Activated CD8-positive, alpha-beta T cell treated with anti-CD3 and anti-CD28 coated beads, Interleukin-2, amount 10 ng/mL, durations not matched to agents 7 days and 5 days (primary cell): ENCODE measurements at regions of chr3 and their contacts with region 1.

Region 1: DNA sequence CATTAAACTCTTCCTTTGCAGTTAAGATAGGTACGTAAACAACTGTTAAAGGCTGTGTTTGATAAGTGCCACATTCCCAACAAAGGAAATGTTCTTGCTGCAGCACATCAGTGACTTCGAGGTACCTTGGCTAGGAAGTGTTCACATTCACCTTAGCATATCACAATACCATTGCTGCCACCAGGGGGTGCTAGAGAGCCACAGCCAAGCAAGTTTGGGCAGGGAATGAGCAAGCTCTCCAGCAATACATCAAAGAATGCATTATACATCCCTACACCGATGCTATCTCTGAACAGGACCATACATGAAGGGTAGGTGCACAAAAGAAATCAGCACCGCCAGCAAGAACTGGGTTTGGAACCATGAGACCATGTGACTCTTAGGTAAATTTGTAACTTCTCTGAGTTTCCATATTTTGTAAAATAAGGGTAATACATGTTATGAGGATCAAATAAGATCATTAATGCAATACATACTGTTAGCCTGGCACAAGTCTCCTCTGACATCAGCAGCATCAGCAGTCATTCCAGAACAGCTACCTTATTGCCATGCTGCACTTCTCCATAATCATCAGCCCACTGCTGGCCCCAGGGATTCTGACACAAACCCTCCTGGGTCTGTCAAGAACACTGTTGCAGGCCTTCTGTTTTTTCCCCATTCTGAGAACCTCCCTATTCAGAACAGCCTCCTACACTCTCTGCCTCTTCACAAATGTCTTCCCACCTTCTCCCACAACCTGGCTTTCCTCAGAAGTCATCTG is 37.6 kb downstream of the RYK start:
- DNase-seq: peak; percentile 88
- ATAC-seq: peak; percentile 91
- H3K4me3 Mint-ChIP-seq: no peak overlapping the region
- H3K27ac Mint-ChIP-seq: no peak overlapping the region
- H3K4me1 Mint-ChIP-seq: peaks cover 10% of the 10 kb centered on the region
- H3K27me3 Mint-ChIP-seq: no peaks in the 10 kb centered on the region

Region 2: GRCh38 chr3:133927540-133928066 is 285.5 kb before region 1 on chr3:
- CTCF ChIA-PET with region 1: interaction called, 28 read pairs
- POLR2A ChIA-PET with region 1: no interaction called
- DNase-seq: peak; percentile 70
- ATAC-seq: peak; percentile 96
- H3K4me3 Mint-ChIP-seq: peak overlapping the region; percentile 60
- H3K27ac Mint-ChIP-seq: no peak overlapping the region
- H3K4me1 Mint-ChIP-seq: peaks cover 9% of the 10 kb centered on the region
- H3K27me3 Mint-ChIP-seq: peaks cover 21% of the 10 kb centered on the region

Region 3: GRCh38 chr3:134232151-134232550 is 19.1 kb after region 1 on chr3:
- CTCF ChIA-PET with region 1: interaction called, 43 read pairs
- POLR2A ChIA-PET with region 1: no interaction called
- DNase-seq: no peak
- ATAC-seq: peak; percentile 53
- H3K4me3 Mint-ChIP-seq: no peak overlapping the region
- H3K27ac Mint-ChIP-seq: no peak overlapping the region
- H3K4me1 Mint-ChIP-seq: peaks cover 22% of the 10 kb centered on the region
- H3K27me3 Mint-ChIP-seq: peaks cover 3% of the 10 kb centered on the region

Region 4: DNA sequence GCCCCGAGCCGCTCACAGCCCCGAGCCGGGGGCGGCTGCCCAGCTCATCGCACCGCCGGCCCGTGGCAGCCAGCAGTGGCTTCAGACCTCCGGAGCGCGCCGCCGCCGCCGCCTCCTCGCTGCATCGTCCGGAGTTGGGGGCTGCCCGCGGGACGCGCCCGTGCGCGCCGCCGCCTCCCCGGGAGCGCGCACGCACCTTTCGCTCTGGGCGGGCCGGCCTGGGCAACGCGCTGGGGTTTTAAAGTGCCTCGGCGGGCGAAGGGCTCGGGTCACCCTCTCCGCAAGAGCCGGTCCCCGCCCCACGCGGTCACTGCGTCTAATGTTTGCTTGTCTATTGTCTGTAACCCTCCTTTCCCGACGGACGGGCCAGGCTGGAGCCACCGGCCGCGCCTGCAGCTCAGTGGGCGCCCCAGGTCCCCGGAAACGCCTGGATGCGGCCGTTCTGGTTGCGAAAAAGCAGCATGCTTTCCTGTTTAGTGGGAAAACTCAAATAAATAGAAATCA is 37.7 kb after region 1 on chr3 and contains the start of gene RYK:
- CTCF ChIA-PET with region 1: interaction called, 10 read pairs
- POLR2A ChIA-PET with region 1: no interaction called
- DNase-seq: peak; percentile 71
- ATAC-seq: peak; percentile 86
- H3K4me3 Mint-ChIP-seq: peak within 1 kb of the TSS; percentile 87
- H3K27ac Mint-ChIP-seq: peak within 1 kb of the TSS; percentile 80
- H3K4me1 Mint-ChIP-seq: peaks cover 30% of the 10 kb centered on the region
- H3K27me3 Mint-ChIP-seq: peaks cover 21% of the 10 kb centered on the region
- total RNA-seq, gene RYK: 6.9 to 9.4 TPM

Region 5: GRCh38 chr3:134287512-134287911 is 74.4 kb after region 1 on chr3:
- CTCF ChIA-PET with region 1: no interaction called
- POLR2A ChIA-PET with region 1: no interaction called
- DNase-seq: no peak
- ATAC-seq: no peak
- H3K4me3 Mint-ChIP-seq: no peak overlapping the region
- H3K27ac Mint-ChIP-seq: no peak overlapping the region
- H3K4me1 Mint-ChIP-seq: no peaks in the 10 kb centered on the region
- H3K27me3 Mint-ChIP-seq: peaks cover 50% of the 10 kb centered on the region

Region 6: DNA sequence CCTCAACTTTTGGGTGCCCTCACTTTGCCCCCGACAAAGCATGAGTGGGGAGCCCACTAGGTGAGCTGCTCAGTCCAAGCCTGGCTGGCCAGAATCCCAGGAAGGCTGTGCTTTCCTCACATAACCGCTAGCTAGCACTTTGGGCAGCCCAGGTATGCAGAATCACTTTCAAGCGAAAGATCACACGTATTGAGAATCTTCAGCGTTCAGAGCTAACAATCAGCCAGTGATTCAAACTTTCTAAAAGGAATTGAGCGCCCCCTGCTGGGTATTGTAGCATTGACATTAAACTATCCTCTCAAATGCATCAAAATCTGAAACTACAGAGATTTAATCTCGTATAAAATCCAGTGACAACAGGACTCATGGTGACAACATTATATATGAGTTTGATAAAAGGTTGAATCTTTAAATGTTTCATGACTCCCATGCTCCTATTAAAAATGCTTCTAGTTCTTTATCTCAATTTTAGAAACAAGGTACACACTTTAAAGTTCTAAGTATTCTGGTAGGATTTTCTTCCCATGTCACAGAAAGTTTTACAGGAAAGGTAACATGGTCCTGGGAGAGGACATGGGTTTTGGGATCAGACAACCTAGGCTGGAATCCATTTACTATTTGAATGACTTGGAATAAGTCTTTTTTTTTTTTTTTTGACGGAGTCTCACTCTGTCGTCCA is 260.9 kb after region 1 on chr3:
- CTCF ChIA-PET with region 1: interaction called, 41 read pairs
- POLR2A ChIA-PET with region 1: no interaction called
- DNase-seq: peak; percentile 88
- ATAC-seq: peak; percentile 79
- H3K4me3 Mint-ChIP-seq: no peak overlapping the region
- H3K27ac Mint-ChIP-seq: no peak overlapping the region
- H3K4me1 Mint-ChIP-seq: no peaks in the 10 kb centered on the region
- H3K27me3 Mint-ChIP-seq: no peaks in the 10 kb centered on the region